Testis (tissue), 5 donors: ENCODE measurements at regions of chr4 and their contacts with region 1.

Region 1: GRCh38 chr4:109424093-109424841 is 9.3 kb upstream of the SEC24B start:
- DNase-seq: no peak
- H3K4me3 ChIP-seq: no peak overlapping the region
- H3K27ac ChIP-seq: no peak overlapping the region
- H3K4me1 ChIP-seq: no peaks in the 10 kb centered on the region
- H3K27me3 ChIP-seq: no peaks in the 10 kb centered on the region
- CTCF ChIP-seq: no peak
- POLR2A ChIP-seq: no peak

Region 2: DNA sequence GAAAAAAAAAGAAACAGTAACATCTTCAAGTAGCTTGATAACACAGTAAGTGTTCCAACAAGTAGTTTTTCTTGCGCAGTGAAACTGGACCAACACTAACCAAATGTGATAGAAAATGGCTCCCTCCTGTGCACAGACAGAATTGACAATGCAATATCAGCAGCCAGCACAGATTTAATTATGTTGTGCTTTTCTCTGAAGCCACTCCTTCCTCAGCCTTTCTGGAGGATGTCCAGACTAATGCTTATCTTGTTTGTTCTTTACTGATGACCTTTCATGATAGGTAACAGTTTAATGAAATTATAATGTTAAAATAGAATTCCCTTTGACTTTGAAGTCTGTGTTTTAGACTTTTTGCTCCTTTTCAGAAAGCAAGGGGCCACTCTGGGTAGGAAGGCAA is 951.0 kb before region 1 on chr4:
- intact Hi-C with region 1: no loop called
- DNase-seq: no peak
- H3K4me3 ChIP-seq: no peak overlapping the region
- H3K27ac ChIP-seq: no peak overlapping the region
- H3K4me1 ChIP-seq: no peaks in the 10 kb centered on the region
- H3K27me3 ChIP-seq: no peaks in the 10 kb centered on the region
- CTCF ChIP-seq: no peak
- POLR2A ChIP-seq: no peak

Region 3: GRCh38 chr4:109826719-109827118 is 402.5 kb after region 1 on chr4:
- intact Hi-C with region 1: loop called (anchors 10 kb)
- DNase-seq: no peak
- H3K4me3 ChIP-seq: no peak overlapping the region
- H3K27ac ChIP-seq: no peak overlapping the region
- H3K4me1 ChIP-seq: no peaks in the 10 kb centered on the region
- H3K27me3 ChIP-seq: no peaks in the 10 kb centered on the region
- CTCF ChIP-seq: peak in 1 of 3 experiments; percentile 59
- POLR2A ChIP-seq: no peak

Region 4: DNA sequence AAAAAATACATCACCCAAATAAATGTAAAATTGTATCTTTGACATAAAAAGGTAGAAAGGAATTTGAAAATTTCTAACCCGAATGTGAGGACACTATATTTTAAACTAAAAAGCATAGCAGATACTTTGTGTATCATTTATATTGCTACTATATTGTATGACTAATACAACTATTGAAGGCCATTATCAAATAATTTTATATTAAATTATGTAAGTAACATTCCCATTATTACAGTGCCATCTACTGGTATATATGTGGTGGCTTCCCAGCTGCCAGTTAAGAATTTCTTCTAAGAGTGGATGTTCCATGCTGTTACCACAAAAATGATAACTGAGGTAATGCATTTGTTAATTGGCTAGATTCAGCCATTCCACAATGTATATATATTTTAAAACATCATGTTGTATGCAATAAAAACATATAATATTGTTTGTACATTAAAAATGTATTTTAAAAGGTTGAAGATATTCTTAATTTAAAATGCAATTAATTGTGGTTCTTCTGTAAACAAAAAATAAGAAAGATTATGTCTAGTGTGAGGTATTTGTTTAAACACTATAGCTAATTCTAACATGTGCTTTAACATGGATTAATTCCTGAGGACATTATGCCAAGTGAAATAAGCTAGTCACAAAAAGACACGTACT is 553.7 kb after region 1 on chr4:
- intact Hi-C with region 1: loop called (anchors 10 kb)
- DNase-seq: peak; percentile 29
- H3K4me3 ChIP-seq: no peak overlapping the region
- H3K27ac ChIP-seq: no peak overlapping the region
- H3K4me1 ChIP-seq: no peaks in the 10 kb centered on the region
- H3K27me3 ChIP-seq: no peaks in the 10 kb centered on the region
- CTCF ChIP-seq: peak in 1 of 3 experiments; percentile 60
- POLR2A ChIP-seq: no peak